Activated CD4-positive, alpha-beta T cell treated with anti-CD3 and anti-CD28 coated beads for 36 hours (primary cell): ENCODE measurements at regions of chr4 and their contacts with region 1.

Region 1: GRCh38 chr4:189870470-189871234 is 70.0 kb upstream of the FRG1 start:
- DNase-seq: no peak
- ATAC-seq: no peak
- H3K4me3 Mint-ChIP-seq: no peak overlapping the region
- H3K27ac Mint-ChIP-seq: no peak overlapping the region
- H3K4me1 Mint-ChIP-seq: no peaks in the 10 kb centered on the region
- H3K27me3 Mint-ChIP-seq: no peaks in the 10 kb centered on the region

Region 2: DNA sequence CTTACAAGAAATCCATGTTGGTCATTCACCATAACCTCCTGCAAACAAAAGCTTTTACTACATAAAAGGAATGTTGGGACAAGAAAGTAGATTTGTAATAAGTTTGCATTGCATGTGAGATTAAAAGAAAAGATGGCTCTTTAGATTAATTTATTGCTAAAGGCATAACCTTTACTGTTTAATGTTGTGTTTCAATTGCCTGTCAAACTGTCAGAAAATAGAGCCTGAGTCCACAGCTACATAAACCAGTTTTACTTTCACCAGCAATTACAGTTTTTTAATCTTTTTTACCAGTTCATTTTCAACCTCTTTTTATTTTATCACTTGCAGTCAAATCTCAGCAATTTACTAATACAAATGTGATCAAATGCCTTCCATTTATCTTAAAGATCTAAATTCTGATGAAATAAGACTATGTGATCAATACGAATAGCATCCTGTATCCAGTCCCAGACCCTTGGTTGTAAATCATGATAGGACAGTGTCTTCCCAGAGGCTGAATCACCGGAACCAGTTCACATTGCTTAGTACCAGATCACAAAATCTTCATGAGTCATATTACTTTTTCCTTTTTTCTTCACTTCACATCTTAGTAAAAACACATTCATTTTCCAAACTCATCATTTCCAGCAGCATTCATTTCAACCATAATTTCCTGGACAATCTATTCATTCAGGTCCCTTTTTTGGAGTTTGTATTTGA is 25.4 kb before region 1 on chr4:
- CTCF ChIA-PET with region 1: no interaction called
- POLR2A ChIA-PET with region 1: no interaction called
- intact Hi-C with region 1: loop called in 1 of 2 experiments (anchors 1 kb)
- DNase-seq: no peak
- ATAC-seq: no peak
- H3K4me3 Mint-ChIP-seq: no peak overlapping the region
- H3K27ac Mint-ChIP-seq: no peak overlapping the region
- H3K4me1 Mint-ChIP-seq: no peaks in the 10 kb centered on the region
- H3K27me3 Mint-ChIP-seq: no peaks in the 10 kb centered on the region